ENCODE measurements at regions of chr5 and their contacts with region 1.

Region 1: GRCh38 chr5:141618804-141619554 is at the start of gene DIAPH1:
- DNase-seq: peak; percentile 92 to 99 (median 97)
- ATAC-seq: peak; percentile 89 to 91
- H3K4me3 Mint-ChIP-seq: peak within 1 kb of the TSS; percentile 94 to 100 (median 98)
- H3K27ac Mint-ChIP-seq: peak within 1 kb of the TSS; percentile 94 to 99 (median 96)
- H3K4me1 Mint-ChIP-seq: peaks cover 32 to 56% (median 46%) of the 10 kb centered on the region in 4 donors
- H3K27me3 Mint-ChIP-seq: no peaks in the 10 kb centered on the region
- polyA plus RNA-seq, gene DIAPH1: 87.4 to 105 (median 92.9) TPM

Region 2: DNA sequence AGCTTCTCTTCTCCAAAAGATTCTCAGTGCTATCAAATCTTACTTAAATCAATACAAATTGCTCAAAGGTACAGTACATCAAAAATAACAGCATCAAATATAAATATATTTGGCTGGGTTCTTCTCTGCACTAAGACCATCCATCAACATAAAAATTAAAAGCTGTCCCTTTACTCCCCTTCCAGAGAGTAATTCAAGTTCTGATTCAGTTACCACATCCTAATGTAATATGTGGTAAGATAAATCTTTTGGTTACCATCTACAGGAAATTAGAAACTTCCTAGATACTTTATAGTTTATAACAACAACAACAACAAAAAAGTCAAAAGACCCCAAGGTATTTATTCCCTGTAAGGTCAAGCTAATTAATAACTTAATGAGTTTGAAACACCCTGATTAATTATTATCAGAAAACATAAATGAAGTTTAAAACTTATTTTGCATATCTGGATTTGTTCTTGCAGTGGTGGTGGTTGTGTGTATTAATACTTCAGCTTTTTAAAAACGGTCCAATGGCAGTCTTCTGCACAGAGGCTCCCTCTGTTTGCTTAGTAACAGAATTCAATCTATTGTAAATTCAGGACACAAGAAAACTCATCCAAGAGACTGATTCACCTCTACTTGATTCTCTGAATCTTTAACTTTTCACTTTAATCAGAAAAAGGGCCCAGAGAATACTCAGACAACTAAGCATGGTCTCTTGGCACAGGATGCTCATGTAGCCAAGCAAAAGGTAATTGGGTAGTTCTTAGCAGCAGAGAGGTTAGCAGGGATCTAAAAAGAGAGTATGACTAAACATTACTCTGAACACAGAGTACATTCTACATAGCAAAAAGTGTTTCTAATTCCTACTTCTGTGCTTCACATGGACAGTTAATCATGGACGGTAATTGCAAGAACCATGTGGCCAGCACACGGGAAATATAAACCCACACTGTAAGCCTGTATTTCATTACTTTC is 20.3 kb before region 1 on chr5:
- POLR2A ChIA-PET with region 1: interaction called, 98 read pairs
- DNase-seq: no peak
- ATAC-seq: peak; percentile 43 to 52
- H3K4me3 Mint-ChIP-seq: peak overlapping the region in 7 of 10 donors; percentile 12 to 50 (median 39)
- H3K27ac Mint-ChIP-seq: peak overlapping the region in 9 of 10 donors; percentile 18 to 95 (median 86)
- H3K4me1 Mint-ChIP-seq: peaks cover 27 to 83% (median 71%) of the 10 kb centered on the region in 4 donors
- H3K27me3 Mint-ChIP-seq: no peaks in the 10 kb centered on the region

Region 3: GRCh38 chr5:141605523-141606277 is 13.3 kb before region 1 on chr5:
- POLR2A ChIA-PET with region 1: interaction called, 70 read pairs
- DNase-seq: peak; percentile 27 to 90 (median 79)
- ATAC-seq: peak; percentile 96 to 98
- H3K4me3 Mint-ChIP-seq: peak overlapping the region; percentile 58 to 80 (median 77)
- H3K27ac Mint-ChIP-seq: peak overlapping the region; percentile 78 to 95 (median 90)
- H3K4me1 Mint-ChIP-seq: peaks cover 22 to 99% (median 78%) of the 10 kb centered on the region in 4 donors
- H3K27me3 Mint-ChIP-seq: no peaks in the 10 kb centered on the region

Region 4: GRCh38 chr5:141636413-141637122 is 17.6 kb after region 1 on chr5 and contains the starts of genes HDAC3 and RELL2:
- POLR2A ChIA-PET with region 1: interaction called, 36 read pairs
- DNase-seq: peak; percentile 86 to 97 (median 94)
- ATAC-seq: peak; percentile 73 to 83
- H3K4me3 Mint-ChIP-seq: peak within 1 kb of the TSS; percentile 85 to 97 (median 92)
- H3K27ac Mint-ChIP-seq: peak within 1 kb of the TSS; percentile 31 to 97 (median 92)
- H3K4me1 Mint-ChIP-seq: peaks cover 23 to 50% (median 39%) of the 10 kb centered on the region in 4 donors
- H3K27me3 Mint-ChIP-seq: no peaks in the 10 kb centered on the region
- polyA plus RNA-seq, gene HDAC3: 85.7 to 100 (median 91.7) TPM
- polyA plus RNA-seq, gene RELL2: 2.6 to 3.9 (median 3.4) TPM

Region 5: DNA sequence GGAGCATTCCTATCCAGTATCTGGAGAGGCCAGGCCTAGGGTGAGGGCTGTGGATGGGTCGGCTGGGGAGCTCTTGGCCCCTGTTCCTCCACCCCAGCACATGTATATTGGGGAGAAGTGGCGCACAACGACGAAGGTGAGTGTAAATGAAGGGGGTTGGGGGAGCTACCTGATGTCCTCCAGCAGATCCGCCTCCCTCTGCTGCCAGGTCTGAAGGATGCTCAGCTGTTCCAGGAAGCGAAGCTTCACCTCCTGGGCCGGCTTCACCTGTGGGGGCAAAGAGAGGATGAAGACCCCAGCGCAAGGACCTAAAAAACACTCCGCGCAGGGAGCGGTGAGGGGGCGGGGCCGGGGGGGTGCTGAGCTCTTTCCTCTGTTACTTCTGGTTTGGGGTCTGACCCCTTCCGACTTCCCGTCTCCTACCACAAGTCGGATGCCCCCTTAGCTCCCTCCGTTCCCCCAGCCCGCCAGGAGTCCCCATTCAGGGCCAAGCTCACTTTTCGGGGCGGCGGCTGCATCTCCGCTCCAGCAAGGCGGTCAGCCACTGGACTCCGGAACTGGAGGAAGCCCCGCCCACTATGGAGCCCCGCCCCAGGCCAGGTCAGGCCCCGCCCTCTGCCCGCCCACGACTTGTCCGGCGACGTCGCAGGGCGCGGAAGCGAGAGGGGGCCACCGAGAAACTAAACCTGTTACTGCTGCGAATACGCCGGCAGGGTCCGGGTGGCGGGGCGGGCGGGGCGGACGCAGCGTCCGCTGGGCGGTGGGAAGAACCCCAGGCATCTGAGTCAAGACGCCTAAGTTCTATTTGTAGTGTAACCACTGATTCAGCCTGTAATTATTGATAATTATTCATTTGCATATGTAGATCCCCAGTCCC is 32.1 kb after region 1 on chr5 and contains the start of gene FCHSD1:
- POLR2A ChIA-PET with region 1: interaction called, 17 read pairs
- DNase-seq: peak; percentile 57 to 89 (median 80)
- ATAC-seq: peak; percentile 87 to 95
- H3K4me3 Mint-ChIP-seq: peak within 1 kb of the TSS; percentile 67 to 97 (median 92)
- H3K27ac Mint-ChIP-seq: peak within 1 kb of the TSS; percentile 79 to 98 (median 94)
- H3K4me1 Mint-ChIP-seq: peaks cover 37 to 56% (median 44%) of the 10 kb centered on the region in 4 donors
- H3K27me3 Mint-ChIP-seq: peaks cover 0 to 5% (median 0%) of the 10 kb centered on the region in 5 donors
- polyA plus RNA-seq, gene FCHSD1: 8.8 to 9.4 (median 9.3) TPM

Region 6: DNA sequence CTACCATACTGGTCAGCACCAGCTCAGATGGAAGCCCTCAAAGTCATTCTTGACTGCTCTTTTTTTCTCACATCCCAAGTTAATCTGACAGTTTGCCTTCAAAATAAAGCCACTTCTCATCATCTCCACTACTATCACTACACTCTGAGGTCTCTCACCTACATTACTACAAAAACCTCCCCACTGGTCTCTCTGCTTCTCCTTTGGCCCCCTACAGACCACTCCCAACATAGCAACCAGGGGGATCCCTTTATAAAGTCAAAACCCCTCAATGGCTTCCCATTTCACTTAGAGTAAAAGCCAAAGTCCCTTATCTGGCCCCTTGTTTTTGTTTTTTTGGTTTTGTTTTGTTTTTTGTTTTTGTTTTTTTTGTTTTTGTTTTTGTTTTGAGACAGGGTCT is 58.4 kb after region 1 on chr5:
- POLR2A ChIA-PET with region 1: no interaction called
- DNase-seq: no peak
- ATAC-seq: no peak
- H3K4me3 Mint-ChIP-seq: no peak overlapping the region
- H3K27ac Mint-ChIP-seq: peak overlapping the region in 1 of 10 donors; percentile 1
- H3K4me1 Mint-ChIP-seq: peaks cover 12 to 16% (median 14%) of the 10 kb centered on the region in 4 donors
- H3K27me3 Mint-ChIP-seq: peaks cover 0 to 1% (median 0%) of the 10 kb centered on the region in 5 donors

Region 7: GRCh38 chr5:141717043-141717442 is 98.1 kb after region 1 on chr5:
- POLR2A ChIA-PET with region 1: no interaction called
- DNase-seq: no peak
- ATAC-seq: no peak
- H3K4me3 Mint-ChIP-seq: no peak overlapping the region
- H3K27ac Mint-ChIP-seq: no peak overlapping the region
- H3K4me1 Mint-ChIP-seq: no peaks in the 10 kb centered on the region
- H3K27me3 Mint-ChIP-seq: peaks cover 2 to 41% (median 9%) of the 10 kb centered on the region in 5 donors

Region 8: GRCh38 chr5:141910271-141910673 is 291.3 kb after region 1 on chr5:
- POLR2A ChIA-PET with region 1: no interaction called
- DNase-seq: no peak
- ATAC-seq: no peak
- H3K4me3 Mint-ChIP-seq: no peak overlapping the region
- H3K27ac Mint-ChIP-seq: no peak overlapping the region
- H3K4me1 Mint-ChIP-seq: peaks cover 5 to 15% (median 9%) of the 10 kb centered on the region in 4 donors
- H3K27me3 Mint-ChIP-seq: peaks cover 14 to 23% (median 18%) of the 10 kb centered on the region in 5 donors